HEK293 (cell line): ENCODE measurements at regions of chr20 and their contacts with region 1.

Region 1: DNA sequence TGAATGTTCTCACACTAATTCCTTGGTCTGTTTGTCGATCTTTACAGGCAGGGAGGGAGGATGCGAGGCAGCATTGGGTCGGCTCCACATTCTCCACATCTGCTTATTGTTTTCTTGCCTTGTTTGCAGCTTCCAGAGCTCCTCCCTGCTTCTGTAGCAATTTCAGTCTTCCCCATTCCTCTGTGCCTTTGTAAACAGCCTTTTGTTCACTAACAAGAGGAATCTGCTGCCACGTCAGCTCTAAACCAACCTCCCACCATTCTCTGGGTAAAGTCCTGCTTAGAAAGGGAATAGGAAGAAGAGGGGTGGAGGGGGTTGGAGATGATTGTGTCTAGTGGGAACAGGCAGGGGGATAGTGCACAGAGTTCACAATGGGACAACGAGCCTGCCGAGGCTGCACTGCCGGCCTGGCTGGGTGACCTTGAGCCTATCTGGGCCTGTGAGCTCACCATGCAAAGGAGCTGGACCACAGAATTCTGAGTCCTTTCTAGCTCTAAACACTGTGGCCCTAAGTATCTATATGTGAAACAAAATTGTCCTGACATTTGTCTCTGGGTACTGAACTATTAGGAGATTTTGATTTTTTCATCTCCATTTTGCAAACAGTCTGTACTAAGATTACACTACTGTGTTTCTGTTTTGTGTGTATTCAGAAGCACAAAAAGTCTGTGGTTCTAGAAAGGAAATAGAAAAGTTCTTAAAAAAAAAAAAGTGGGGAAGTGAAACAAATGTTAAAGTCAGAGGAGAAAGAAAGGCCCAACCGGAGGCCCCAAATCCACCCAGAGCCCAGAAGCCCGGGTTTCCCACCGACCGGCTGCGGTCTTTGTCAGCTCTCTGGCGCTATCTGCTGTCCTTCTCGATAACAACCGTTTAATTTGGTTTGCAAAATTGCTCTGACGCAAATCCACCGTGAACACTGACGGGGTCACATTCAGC is 1.4 kb upstream of the PRND start:
- H3K4me3 ChIP-seq: no peak overlapping the region
- H3K27ac ChIP-seq: no peak overlapping the region
- H3K4me1 ChIP-seq: no peaks in the 10 kb centered on the region
- CTCF ChIP-seq: peak; percentile 75

Region 2: GRCh38 chr20:4607287-4607713 is 113.0 kb before region 1 on chr20:
- CTCF ChIA-PET with region 1: interaction called, 31 read pairs
- POLR2A ChIA-PET with region 1: interaction called, 5 read pairs
- H3K4me3 ChIP-seq: no peak overlapping the region
- H3K27ac ChIP-seq: no peak overlapping the region
- H3K4me1 ChIP-seq: peaks cover 18% of the 10 kb centered on the region
- CTCF ChIP-seq: peak; percentile 76

Region 3: GRCh38 chr20:4613718-4614620 is 106.3 kb before region 1 on chr20:
- CTCF ChIA-PET with region 1: interaction called, 17 read pairs
- POLR2A ChIA-PET with region 1: interaction called, 4 read pairs
- H3K4me3 ChIP-seq: no peak overlapping the region
- H3K27ac ChIP-seq: no peak overlapping the region
- H3K4me1 ChIP-seq: peaks cover 10% of the 10 kb centered on the region
- CTCF ChIP-seq: peak; percentile 64